Heart left ventricle (tissue), 16 donors: ENCODE measurements at regions of chr20 and their contacts with region 1.

Region 1: DNA sequence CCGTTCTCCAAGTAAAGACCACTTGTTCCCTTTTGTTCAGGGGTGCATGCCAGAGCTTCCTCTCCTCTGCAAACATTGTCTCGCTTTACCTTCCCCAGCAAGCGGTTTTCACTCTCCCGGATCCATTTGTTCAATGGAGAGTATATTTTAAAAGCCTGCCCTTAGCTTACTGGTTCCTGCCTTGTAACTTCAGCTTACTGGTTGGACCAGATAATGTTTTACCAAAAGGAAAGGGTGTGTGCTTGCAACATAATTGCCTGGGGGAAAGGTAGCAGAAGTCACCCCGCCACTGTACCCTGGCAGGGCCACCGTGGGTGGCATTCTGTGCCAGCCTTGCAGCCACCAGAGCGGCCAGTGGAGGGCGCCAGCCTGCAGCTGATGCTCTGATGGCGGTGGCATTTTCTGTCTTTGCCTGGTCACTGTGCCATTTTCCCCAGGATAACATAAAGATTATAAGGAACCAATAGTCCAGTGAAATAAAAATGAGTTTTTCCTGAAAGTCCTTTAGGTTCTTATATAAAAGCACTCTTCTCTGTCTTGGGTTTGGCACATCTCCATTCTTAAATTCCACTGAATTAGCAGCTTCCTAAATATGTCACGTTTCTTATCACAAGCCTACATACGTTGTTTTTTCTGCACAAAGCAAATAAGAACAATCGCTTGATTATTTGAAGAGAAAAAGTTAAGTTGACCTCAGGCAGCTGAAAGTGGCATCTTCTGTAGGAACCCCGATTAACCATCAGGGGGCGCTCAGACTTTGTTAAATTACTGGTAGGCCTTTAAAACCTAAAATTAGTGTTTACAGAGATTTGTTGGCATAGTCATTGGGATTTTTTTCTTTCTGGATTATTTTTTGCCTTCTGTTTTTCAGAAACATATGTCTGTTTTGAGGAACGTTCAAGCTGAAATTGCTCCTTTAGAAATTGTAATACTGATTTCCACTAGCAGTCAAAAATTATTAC is 67.4 kb upstream of the XRN2 start:
- DNase-seq: peak; percentile 36 to 71 (median 44)
- ATAC-seq: peak; percentile 44 to 82 (median 72)
- H3K4me3 ChIP-seq: no peak overlapping the region
- H3K27ac ChIP-seq: no peak overlapping the region
- H3K4me1 ChIP-seq: peaks cover 0 to 8% (median 3%) of the 10 kb centered on the region in 12 donors
- H3K27me3 ChIP-seq: no peaks in the 10 kb centered on the region
- CTCF ChIP-seq: peak; percentile 64 to 86 (median 72)
- POLR2A ChIP-seq: no peak

Region 2: GRCh38 chr20:19644085-19644484 is 1591.7 kb before region 1 on chr20:
- intact Hi-C with region 1: loop called in 1 of 10 experiments (anchors 10 kb)
- DNase-seq: no peak
- ATAC-seq: no peak
- H3K4me3 ChIP-seq: no peak overlapping the region
- H3K27ac ChIP-seq: no peak overlapping the region
- H3K4me1 ChIP-seq: peaks cover 0 to 4% (median 0%) of the 10 kb centered on the region in 12 donors
- H3K27me3 ChIP-seq: no peaks in the 10 kb centered on the region
- CTCF ChIP-seq: no peak
- POLR2A ChIP-seq: no peak

Region 3: GRCh38 chr20:20860078-20860806 is 375.5 kb before region 1 on chr20:
- intact Hi-C with region 1: loop called in 7 of 10 experiments (anchors 5 to 10 kb)
- DNase-seq: peak; percentile 80 to 90 (median 87)
- ATAC-seq: peak; percentile 67 to 90 (median 82)
- H3K4me3 ChIP-seq: no peak overlapping the region
- H3K27ac ChIP-seq: no peak overlapping the region
- H3K4me1 ChIP-seq: no peaks in the 10 kb centered on the region
- H3K27me3 ChIP-seq: peaks cover 0 to 23% (median 5%) of the 10 kb centered on the region in 9 donors
- CTCF ChIP-seq: peak; percentile 87 to 98 (median 94)
- POLR2A ChIP-seq: no peak

Region 4: DNA sequence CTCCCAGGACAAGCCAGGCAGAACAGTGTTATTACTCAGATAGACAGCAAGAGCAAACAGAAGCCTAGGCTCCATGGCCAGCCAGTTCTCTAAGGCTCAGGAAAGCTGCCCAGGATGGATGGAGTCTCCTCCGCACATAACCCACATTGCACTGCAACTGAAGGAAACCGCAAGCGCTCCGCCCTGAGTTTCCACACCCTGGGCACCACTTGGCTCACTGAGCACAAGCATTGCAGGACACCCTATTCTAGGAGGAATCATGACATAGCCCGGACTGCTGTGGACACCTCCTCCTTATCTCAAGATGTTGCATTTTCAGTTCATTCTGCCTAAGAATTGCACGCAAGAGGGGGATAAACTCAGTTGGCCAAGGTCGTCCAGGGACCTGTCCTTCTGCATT is 172.5 kb before region 1 on chr20:
- intact Hi-C with region 1: no loop called
- DNase-seq: no peak
- ATAC-seq: no peak
- H3K4me3 ChIP-seq: no peak overlapping the region
- H3K27ac ChIP-seq: no peak overlapping the region
- H3K4me1 ChIP-seq: no peaks in the 10 kb centered on the region
- H3K27me3 ChIP-seq: peaks cover 0 to 21% (median 0%) of the 10 kb centered on the region in 9 donors
- CTCF ChIP-seq: no peak
- POLR2A ChIP-seq: no peak

Region 5: DNA sequence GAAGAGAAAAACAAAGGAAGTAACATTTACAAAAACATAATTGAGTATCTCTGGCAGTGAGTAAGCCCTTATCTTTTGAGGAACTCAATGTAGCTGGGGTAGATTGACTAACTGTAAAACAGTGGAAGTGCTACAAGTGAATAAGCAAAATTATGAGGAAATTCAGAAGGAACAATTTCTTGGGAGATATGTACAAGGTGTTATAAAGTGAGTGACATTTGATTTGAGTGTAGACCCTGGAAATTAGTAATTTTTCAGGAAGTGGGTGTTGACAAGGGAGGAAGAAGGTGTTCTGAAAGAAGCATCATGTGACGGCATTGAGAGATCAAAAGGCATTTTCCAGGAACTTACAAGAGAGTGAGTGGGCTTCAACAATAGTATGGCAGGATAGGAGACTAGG is 89.5 kb after region 1 on chr20:
- intact Hi-C with region 1: no loop called
- DNase-seq: no peak
- ATAC-seq: peak in 3 of 4 donors; percentile 36 to 59 (median 55)
- H3K4me3 ChIP-seq: no peak overlapping the region
- H3K27ac ChIP-seq: peak overlapping the region in 3 of 12 donors; percentile 5 to 67 (median 35)
- H3K4me1 ChIP-seq: peaks cover 0 to 60% (median 40%) of the 10 kb centered on the region in 12 donors
- H3K27me3 ChIP-seq: no peaks in the 10 kb centered on the region
- CTCF ChIP-seq: no peak
- POLR2A ChIP-seq: no peak

Region 6: DNA sequence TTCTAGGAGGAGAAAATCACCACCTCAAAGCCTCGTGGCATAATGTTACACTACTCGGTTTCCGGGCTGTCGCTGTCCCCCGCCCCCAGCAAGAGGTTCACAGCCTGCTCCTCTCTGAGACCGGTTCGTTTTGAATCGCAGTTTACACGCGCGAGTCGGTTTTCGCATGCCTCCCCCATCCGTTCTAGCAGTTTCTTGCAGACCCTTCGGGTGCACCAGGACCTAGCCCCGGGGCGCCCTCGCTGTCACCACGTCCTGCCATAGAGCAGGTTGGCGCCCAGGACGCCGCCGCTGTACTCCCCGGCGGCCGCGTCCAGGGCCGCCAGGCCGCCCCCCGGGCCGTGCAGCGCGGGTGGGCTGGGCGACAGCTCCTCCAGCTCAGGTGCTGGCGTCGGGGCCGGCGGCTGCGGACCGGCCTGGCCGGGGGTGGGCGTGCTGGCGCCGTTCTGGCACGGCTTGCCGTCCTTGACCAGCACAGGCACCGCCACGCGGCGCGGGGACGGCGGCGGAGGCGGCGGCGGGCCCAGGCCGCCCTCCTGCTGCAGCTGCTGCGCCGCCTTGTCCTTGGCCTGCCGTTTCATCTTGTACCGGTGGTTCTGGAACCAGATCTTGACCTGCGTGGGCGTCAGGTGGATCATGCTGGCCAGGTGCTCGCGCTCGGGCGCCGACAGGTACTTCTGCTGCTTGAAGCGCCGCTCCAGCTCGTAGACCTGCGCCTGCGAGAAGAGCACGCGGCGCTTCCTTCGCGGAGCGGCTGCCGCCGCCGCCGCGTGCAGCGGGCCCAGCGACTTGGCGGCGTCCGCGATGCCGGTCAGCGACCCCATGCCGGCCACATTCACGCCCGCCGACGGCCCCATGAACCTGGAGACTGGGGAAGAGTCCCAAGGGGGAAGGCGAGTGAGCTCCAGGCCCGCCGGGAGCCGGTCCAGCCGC is 160.2 kb after region 1 on chr20:
- intact Hi-C with region 1: loop called in 2 of 10 experiments (anchors 10 kb)
- DNase-seq: peak in 2 of 5 donors; percentile 17 to 30
- ATAC-seq: no peak
- H3K4me3 ChIP-seq: peak overlapping the region in 5 of 12 donors; percentile 8 to 35 (median 10)
- H3K27ac ChIP-seq: no peak overlapping the region
- H3K4me1 ChIP-seq: peaks cover 0 to 28% (median 1%) of the 10 kb centered on the region in 12 donors
- H3K27me3 ChIP-seq: peaks cover 79 to 100% (median 94%) of the 10 kb centered on the region in 9 donors
- CTCF ChIP-seq: no peak
- POLR2A ChIP-seq: no peak

Region 7: DNA sequence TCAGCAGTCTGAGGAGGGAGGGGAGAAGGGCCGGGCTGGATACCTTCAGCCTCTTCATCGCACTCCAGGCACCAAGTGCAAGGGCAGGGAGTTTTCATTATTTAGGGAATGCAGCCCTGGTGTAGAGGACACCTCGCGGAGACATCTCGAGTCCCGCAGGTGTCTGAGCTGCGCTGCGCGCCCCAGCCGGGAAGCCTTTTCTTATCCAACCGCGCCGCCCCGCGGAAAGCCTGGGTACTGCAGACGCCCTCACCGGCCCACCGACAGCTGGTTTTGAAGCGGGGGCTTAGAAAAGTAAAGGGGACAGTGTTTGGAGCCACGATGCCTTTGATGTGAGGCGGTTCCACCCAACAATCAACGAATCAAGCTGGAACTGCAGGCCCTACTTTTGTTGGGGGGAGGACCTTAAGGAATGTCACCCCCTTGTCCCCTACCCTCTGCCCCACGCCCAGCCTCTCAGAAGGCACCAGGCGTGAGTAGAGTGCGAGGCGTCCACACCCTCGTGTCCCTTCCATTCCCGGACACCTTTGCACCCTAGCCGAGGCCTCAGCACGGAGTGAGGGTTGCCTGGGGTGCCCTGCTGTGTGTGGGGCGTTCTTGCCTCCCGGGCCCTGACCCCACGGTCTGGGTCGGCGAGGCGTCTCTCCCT is 269.5 kb after region 1 on chr20:
- intact Hi-C with region 1: loop called (anchors 1 to 2 kb)
- DNase-seq: peak; percentile 36 to 86 (median 55)
- ATAC-seq: peak in 3 of 4 donors; percentile 48 to 76 (median 70)
- H3K4me3 ChIP-seq: peak overlapping the region in 9 of 12 donors; percentile 22 to 57 (median 44)
- H3K27ac ChIP-seq: no peak overlapping the region
- H3K4me1 ChIP-seq: peaks cover 0 to 31% (median 19%) of the 10 kb centered on the region in 12 donors
- H3K27me3 ChIP-seq: peaks cover 51 to 98% (median 76%) of the 10 kb centered on the region in 9 donors
- CTCF ChIP-seq: peak; percentile 88 to 97 (median 93)
- POLR2A ChIP-seq: no peak

Region 8: GRCh38 chr20:21615617-21616080 is 379.9 kb after region 1 on chr20:
- intact Hi-C with region 1: loop called in 1 of 10 experiments (anchors 5 kb)
- DNase-seq: peak in 4 of 5 donors; percentile 15 to 42 (median 32)
- ATAC-seq: peak in 3 of 4 donors; percentile 54 to 72 (median 64)
- H3K4me3 ChIP-seq: no peak overlapping the region
- H3K27ac ChIP-seq: no peak overlapping the region
- H3K4me1 ChIP-seq: no peaks in the 10 kb centered on the region
- H3K27me3 ChIP-seq: peaks cover 0 to 28% (median 5%) of the 10 kb centered on the region in 9 donors
- CTCF ChIP-seq: peak; percentile 40 to 75 (median 64)
- POLR2A ChIP-seq: no peak